ENCODE measurements at regions of chr6 and their contacts with region 1.

Region 1: DNA sequence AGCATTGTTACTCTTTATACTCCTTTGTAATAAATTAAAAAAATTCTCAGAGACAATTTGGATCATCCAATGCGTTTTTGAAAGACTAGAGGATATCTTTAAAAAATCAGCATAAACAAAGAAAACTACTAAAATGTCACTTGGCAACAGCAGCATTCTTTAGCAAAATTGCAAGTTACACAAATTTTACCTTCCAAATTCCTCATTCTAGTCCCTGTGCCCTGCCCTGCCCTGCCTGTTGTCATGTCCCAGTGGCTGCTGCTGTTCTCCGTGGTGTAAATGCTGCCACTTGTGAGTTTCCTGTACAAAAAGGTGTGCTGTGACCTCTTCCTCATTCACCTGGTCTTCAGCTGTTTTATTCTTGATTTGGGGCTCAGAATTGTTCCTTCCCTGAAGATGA is 83.2 kb downstream of the CDC5L start:
- H3K4me3 ChIP-seq: no peak overlapping the region
- H3K27ac ChIP-seq: no peak overlapping the region
- H3K4me1 ChIP-seq: no peaks in the 10 kb centered on the region
- CTCF ChIP-seq: no peak

Region 2: DNA sequence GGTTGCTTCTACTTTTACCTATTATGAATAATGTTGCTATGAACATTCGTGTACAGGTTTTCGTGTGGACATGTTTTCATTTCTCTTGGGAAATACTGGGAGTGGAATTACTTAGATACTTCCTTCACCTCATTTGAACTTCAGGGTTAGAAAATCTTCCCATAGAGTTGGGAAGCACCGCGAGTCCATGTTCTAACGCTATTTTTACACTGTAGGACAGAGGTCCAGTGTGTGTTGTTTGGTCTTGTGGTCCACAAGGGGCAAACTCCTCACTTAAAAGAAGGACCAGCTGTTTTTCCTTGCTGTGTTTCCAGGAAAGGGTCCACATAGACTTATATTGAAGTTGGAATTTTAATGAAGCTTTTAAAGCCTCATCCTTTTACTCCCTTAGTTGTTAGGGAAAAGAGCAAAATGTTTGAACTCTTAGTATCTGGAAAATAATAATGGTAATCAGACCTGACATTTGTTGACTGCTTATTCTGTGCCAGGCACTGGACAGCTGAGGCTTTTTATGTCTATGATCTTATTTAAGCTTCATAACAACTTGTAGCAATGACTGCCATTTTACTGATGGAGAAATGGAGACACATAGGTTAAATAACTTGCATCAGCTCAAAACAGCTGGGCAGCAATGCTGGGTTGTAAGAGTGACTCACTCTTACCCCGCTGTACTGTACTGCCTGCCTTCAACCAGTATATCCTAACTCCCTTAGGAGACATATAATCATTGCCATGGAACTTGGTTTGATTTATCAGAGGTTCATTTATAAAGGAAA is 31.3 kb before region 1 on chr6:
- CTCF ChIA-PET with region 1: interaction called, 302 read pairs
- POLR2A ChIA-PET with region 1: no interaction called
- H3K4me3 ChIP-seq: no peak overlapping the region
- H3K27ac ChIP-seq: no peak overlapping the region
- H3K4me1 ChIP-seq: peaks cover 10% of the 10 kb centered on the region
- CTCF ChIP-seq: no peak

Region 3: DNA sequence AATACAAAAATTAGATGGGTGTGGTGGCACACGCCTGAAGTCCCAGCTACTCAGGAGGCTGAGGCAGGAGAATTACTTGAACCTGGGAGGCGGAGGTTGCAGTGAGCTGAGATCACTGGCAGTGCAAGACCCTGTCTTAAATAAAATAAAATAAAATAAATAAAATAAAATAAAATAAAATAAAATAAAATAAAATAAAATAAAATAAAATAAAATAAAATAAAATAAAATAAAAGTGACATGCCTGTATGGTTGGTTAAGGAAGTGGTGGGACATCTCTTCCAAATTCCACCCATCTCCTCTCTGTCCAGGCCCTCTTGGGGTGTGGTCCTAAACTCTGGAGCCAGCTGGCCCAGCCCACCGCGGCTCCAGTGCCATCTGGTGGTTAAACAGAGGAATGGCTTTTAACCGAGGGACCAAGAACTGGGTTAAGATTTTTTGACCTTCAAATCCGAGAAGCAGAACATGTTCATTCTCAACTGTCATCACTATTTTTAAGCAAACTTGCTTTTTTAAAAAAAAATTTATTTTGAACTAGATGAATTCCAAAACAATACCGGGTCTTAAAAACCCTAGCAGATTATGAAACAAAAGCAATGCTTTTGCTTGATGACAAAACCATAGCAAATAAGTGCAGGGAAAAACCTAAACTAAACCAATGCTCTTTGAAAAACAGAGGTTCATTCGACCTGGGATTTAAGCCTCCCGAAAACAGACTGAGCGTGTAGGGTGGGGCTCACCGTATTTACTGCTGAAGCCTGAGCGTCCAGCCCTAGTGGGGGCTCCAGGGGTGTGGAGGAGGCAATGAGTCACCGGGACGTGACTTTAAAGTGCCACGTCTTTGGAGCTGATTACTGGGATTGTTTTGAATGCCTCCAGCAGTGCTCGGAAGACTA is 14.4 kb before region 1 on chr6:
- CTCF ChIA-PET with region 1: interaction called, 87 read pairs
- POLR2A ChIA-PET with region 1: interaction called, 5 read pairs
- H3K4me3 ChIP-seq: peak overlapping the region; percentile 24
- H3K27ac ChIP-seq: no peak overlapping the region; the same call in 1 of the 2 replicates
- H3K4me1 ChIP-seq: peaks cover 12% of the 10 kb centered on the region
- CTCF ChIP-seq: peak; percentile 77

Region 4: DNA sequence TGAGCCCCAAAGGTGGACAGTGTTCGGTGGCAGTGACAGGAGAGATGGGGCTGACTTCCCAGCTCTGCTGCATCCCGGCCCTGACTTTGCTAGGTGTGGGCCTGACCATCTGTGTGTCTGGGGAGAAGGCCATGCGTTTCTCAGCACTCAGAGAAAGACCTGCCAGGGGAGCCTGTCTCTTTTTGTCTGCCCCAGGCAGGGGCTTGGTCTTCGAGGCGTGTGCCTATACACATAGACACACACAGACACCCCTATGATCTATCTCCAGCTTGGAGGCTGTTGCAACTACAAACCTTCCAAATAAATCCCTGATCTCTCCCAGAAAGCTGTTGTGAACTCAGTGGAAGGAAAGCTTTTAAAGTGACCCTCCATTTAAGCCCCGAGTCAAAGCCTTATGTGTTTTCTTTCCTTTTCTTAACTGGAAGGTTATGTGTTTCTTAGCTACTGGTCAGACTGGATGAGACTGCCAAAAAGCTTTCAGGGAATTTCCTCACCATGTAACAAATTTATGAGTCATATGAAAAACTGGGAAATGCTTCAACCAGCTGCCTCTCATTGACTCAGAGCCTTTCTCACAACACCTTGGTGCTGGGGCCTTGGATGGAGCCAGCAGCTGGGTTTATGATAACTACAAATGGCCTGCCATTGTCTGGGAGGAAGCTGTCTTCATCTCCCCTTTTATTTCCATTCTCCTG is 19.3 kb after region 1 on chr6:
- CTCF ChIA-PET with region 1: interaction called, 28 read pairs
- POLR2A ChIA-PET with region 1: no interaction called
- H3K4me3 ChIP-seq: no peak overlapping the region
- H3K27ac ChIP-seq: no peak overlapping the region
- H3K4me1 ChIP-seq: no peaks in the 10 kb centered on the region
- CTCF ChIP-seq: no peak